Activated naive CD4-positive, alpha-beta T cell treated with anti-CD3 and anti-CD28 coated beads for 36 hours (primary cell): ENCODE measurements at regions of chr6 and their contacts with region 1.

Region 1: DNA sequence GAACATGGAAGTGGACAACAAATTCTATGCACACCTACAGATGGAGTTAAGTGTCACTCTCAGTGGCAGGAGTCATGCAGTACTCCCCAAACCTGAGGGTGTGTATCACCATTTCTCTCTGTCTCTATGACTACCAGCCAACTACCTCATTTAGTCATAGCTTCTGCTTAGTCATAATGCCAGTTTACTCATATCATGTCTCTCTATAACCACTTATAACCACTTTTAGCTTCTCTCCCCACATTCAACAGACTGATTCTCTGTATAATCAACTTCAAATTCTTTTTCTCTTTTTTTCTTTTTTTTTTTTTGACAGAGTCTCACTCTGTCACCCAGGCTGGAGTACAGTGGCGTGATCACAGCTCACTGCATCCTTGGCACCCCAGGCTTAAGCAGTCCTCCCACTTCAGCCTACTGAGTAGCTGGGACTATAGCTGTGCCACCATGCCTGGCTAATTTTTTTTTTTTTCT is 13.8 kb upstream of the GTF3C6 start:
- DNase-seq: peak; percentile 67
- H3K4me3 Mint-ChIP-seq: no peak overlapping the region
- H3K27ac Mint-ChIP-seq: peak overlapping the region; percentile 51
- H3K4me1 Mint-ChIP-seq: peaks cover 8% of the 10 kb centered on the region
- H3K27me3 Mint-ChIP-seq: no peaks in the 10 kb centered on the region

Region 2: DNA sequence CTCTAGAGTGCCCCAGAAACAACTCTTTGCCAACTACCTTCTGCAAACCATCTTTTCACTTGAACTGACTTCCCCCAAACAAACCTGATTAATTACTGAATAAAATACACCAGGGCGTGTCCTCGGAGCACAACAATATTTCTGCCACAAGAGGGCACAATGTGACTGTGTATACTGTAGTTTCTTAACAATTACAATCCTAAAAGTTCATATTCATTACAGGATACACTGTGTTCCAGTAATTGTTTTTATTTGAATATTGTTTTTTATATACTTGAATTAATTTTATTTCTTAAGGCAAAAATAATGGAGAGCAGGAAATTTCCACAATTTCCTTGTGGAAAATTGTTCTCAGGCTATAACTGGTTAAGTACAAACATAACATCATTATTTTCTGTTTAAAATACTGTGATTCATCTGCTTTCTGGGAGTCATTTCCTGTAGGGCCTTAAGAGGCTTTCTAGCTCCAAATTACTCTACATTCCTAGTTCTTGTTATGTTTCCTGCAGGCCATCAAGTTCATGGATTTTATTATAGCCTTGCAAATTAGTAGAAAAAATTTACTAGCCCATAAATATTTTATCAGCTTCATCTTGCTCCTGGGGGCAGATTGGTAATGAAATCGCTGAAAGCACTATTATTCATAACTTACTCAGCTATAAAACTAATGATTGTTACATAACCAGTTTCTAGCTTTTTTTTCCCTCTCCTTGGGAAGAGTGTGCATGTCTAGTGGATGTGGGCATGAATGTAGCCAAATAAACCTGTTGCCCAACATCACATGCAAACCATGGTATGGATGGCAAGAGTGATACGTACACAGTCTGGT is 416.4 kb before region 1 on chr6:
- CTCF ChIA-PET with region 1: interaction called, 31 read pairs
- intact Hi-C with region 1: loop called (anchors 1 kb)
- DNase-seq: peak; percentile 75
- H3K4me3 Mint-ChIP-seq: no peak overlapping the region
- H3K27ac Mint-ChIP-seq: no peak overlapping the region
- H3K4me1 Mint-ChIP-seq: no peaks in the 10 kb centered on the region
- H3K27me3 Mint-ChIP-seq: no peaks in the 10 kb centered on the region

Region 3: DNA sequence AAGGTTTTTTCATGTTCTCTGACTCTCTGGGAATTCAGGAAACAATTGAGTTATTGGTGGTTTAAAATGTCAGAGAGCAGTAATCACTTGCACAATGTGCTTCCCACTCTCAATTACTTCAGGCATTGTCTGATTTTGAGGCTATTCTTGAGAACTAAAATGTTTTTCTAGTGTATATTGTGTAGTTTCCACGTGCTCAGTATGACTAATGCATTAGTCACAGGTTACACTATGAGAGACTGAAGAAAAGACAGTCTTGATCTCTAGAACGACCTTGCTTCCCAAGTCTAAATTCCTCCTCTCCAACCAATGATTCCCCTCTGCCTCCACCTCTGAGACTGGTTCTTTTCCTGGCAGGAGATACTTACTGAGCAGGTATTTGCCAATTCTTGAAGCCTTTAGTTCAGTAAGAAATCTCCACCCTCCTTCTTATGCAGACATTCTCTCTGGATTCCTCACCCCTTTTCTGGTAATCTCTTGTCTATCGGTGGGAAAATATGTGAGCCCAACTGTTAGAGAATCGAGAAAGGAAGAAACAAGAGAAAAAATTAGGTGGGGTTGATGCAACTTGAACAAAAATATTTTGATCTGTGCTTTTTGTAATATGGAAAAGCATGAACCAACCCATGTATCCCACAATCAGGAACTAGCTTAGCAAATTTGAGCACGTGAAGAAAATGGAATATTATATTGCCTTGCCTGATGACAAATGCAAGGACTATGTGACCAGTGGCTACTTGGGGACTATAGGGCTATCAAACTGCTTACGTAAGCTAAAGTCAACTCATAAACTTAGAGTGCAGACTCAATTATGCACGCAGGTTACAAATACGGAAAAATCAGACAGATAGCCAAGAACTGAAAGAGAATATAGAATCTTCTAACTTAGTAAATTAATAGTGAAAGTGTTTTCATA is 407.2 kb before region 1 on chr6:
- CTCF ChIA-PET with region 1: interaction called, 3 read pairs
- intact Hi-C with region 1: loop called (anchors 1 kb)
- DNase-seq: no peak
- H3K4me3 Mint-ChIP-seq: no peak overlapping the region
- H3K27ac Mint-ChIP-seq: no peak overlapping the region
- H3K4me1 Mint-ChIP-seq: peaks cover 19% of the 10 kb centered on the region
- H3K27me3 Mint-ChIP-seq: no peaks in the 10 kb centered on the region

Region 4: DNA sequence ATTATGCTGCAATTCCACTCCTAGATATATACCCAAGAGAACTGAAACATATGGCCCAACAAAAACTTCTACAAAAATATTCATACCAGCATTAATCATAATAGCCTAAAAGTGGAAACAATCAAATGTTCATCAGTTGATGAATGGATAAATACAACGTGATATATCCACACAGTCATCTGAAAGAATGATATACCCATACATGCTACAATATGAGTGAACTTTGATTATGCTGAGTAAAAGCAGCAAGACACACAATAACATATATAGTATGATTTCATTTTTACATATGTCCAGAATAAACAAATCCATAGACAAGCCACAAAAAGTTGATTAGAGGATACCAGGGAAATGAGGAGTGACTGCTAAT is 160.1 kb before region 1 on chr6:
- CTCF ChIA-PET with region 1: no interaction called
- intact Hi-C with region 1: loop called (anchors 1 kb)
- DNase-seq: no peak
- H3K4me3 Mint-ChIP-seq: no peak overlapping the region
- H3K27ac Mint-ChIP-seq: no peak overlapping the region
- H3K4me1 Mint-ChIP-seq: peaks cover 23% of the 10 kb centered on the region
- H3K27me3 Mint-ChIP-seq: no peaks in the 10 kb centered on the region

Region 5: DNA sequence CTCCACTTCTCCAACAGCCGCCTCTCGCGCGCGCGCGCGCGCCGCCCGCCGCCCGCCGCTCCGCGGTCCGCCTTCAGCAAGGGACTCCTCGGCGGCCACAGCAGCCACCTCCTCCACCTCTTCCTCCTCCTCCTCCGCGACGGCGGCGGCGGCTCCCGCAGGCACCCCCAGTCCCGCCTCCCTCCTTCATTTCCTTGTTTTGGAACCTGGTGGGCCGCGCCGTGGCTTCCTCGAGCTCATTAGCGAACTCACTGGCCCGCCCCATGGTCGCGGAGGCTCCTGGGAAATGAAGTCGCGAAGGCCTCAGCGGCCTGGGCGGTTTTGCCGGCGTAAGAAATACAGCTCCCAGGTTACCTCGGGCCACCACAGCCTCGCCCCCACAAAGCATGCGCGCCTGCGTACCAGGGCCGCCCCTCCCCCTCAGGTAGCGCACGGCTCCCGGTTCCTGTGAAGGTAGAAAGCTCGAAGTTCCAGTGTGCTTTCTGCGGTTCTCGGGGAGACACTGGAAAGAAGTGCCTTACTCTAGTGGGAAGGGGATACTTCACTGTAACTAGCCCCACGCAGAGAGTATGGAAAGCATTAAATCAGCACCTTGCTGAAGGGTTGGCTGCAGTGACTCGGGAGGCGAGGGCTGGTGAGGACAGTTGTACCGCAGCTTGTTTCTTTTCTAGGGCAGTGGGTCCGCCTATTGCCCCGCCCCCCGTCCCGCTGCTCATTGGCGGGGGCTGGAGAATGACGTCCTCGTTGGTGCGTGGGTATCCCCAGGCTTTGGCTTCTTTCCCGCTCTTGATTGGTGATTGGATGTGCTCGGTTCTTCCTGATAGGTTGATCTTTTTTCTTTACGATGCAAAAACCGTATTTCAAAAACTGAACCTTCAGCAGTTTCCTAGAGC is 129.3 kb before region 1 on chr6 and contains the start of gene CDK19:
- CTCF ChIA-PET with region 1: interaction called, 4 read pairs
- intact Hi-C with region 1: loop called (anchors 1 kb)
- DNase-seq: peak; percentile 99
- H3K4me3 Mint-ChIP-seq: peak within 1 kb of the TSS; percentile 100
- H3K27ac Mint-ChIP-seq: peak within 1 kb of the TSS; percentile 95
- H3K4me1 Mint-ChIP-seq: peaks cover 19% of the 10 kb centered on the region
- H3K27me3 Mint-ChIP-seq: no peaks in the 10 kb centered on the region
- total RNA-seq, gene CDK19: 11.0 to 11.7 TPM

Region 6: GRCh38 chr6:110958329-110959192 is 13.8 kb after region 1 on chr6 and contains the start of gene GTF3C6:
- CTCF ChIA-PET with region 1: interaction called, 5 read pairs
- intact Hi-C with region 1: loop called (anchors 1 kb)
- DNase-seq: peak; percentile 94
- H3K4me3 Mint-ChIP-seq: peak within 1 kb of the TSS; percentile 94
- H3K27ac Mint-ChIP-seq: peak within 1 kb of the TSS; percentile 96
- H3K4me1 Mint-ChIP-seq: peaks cover 14% of the 10 kb centered on the region
- H3K27me3 Mint-ChIP-seq: no peaks in the 10 kb centered on the region
- total RNA-seq, gene GTF3C6: 81.6 to 84.7 TPM

Region 7: GRCh38 chr6:110981202-110981600 is 36.5 kb after region 1 on chr6:
- CTCF ChIA-PET with region 1: no interaction called
- intact Hi-C with region 1: loop called (anchors 1 kb)
- DNase-seq: no peak
- H3K4me3 Mint-ChIP-seq: peak overlapping the region; percentile 96
- H3K27ac Mint-ChIP-seq: peak overlapping the region; percentile 96
- H3K4me1 Mint-ChIP-seq: peaks cover 38% of the 10 kb centered on the region
- H3K27me3 Mint-ChIP-seq: no peaks in the 10 kb centered on the region